HCT116 (cell line): ENCODE measurements at regions of chr13 and their contacts with region 1.

Region 1: DNA sequence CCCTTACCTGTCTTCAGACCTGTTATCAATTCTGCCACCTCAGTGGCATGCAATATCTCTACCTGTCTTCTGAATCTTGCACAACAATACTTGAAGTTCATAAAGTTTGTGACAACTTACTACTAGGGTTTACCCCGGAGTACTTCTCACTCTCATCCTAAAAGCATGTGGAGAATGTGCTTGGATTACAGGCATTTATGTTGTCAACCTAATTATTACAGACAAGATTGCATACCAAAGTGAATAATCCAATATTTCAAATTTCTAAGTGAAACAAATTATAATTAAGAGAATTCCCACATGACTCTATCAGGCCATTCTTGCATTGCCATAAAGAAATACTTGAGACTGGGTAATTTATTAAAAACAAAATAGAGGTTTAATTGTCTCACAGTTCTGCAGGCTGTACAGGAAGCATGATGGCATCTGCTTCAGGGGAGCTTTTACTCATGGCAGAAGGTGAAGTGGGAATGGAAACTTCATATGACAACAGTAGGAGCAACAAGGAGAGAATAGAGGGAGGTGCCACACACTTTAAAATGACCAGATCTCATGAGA is 661.0 kb upstream of the SPRY2 start:
- DNase-seq: no peak
- ATAC-seq: no peak
- H3K4me3 ChIP-seq: no peak overlapping the region
- H3K27ac ChIP-seq: no peak overlapping the region
- H3K4me1 ChIP-seq: no peaks in the 10 kb centered on the region
- H3K27me3 ChIP-seq: no peaks in the 10 kb centered on the region
- CTCF ChIP-seq: no peak
- POLR2A ChIP-seq: no peak
- RAD21 ChIP-seq: no peak

Region 2: DNA sequence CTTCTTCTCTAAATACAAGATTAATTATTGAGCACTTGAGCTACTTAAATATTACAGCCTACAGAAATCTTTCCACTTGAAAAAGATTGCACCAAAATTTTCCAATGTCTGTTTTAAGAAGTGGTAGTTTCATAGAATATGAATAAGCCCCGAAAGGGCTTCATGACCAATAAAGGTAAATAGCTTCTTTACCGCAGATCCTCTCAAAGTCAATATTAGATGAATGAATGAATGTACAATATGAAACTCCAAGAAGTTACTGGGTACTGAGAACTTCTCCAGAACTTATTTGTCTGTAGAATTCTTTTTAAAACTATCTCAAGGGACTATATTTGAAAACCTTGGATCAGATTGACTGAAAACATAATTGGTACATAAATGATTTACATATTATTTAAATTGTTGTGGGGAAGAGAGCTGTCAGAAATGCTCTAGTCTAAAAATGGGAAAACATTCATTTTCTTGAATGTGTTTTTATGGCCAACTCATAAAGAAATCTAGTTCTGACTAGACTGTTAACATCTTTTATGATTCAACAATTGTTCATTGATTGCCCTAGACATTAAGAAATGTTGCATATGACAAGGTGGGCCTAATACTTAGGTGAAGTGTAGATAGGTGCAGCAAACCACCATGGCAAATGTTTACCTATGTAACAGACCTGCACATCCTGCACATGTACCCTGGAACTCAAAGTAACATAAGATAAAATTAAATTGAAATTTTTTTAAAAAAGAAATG is 888.0 kb before region 1 on chr13:
- CTCF ChIA-PET with region 1: no interaction called
- POLR2A ChIA-PET with region 1: no interaction called
- RAD21 ChIA-PET with region 1: no interaction called
- intact Hi-C with region 1: loop called (anchors 5 kb)
- DNase-seq: no peak
- ATAC-seq: no peak
- H3K4me3 ChIP-seq: no peak overlapping the region
- H3K27ac ChIP-seq: no peak overlapping the region
- H3K4me1 ChIP-seq: no peaks in the 10 kb centered on the region
- H3K27me3 ChIP-seq: no peaks in the 10 kb centered on the region
- CTCF ChIP-seq: no peak
- POLR2A ChIP-seq: no peak
- RAD21 ChIP-seq: no peak

Region 3: DNA sequence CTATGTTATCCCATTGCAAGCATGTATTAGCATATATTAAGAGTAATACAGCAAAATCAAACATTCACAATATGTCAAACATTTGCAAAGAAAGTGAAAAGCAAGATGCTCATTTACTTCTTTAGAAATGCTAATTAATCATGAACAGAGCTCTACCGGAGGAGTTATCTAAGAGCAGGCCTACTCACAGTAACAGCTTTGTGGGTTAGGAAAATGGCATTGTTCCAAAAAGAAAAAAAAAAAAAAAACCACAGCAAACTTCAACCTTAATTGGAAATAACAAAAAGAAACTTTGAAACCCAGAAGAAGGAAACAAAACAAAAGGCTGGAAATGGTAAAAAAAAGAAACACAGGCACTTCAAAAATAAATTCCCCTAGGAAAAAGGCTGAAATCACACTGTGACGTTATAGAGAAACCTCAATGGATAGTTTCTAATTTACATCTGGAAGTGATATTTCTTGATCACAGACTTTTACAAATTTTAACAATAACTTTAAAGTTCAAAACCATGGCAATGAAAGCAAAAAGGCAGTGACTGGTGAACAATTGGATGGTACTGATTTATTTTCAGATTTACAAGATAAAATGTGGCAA is 575.8 kb after region 1 on chr13:
- CTCF ChIA-PET with region 1: no interaction called
- POLR2A ChIA-PET with region 1: no interaction called
- RAD21 ChIA-PET with region 1: no interaction called
- intact Hi-C with region 1: no loop called
- DNase-seq: no peak
- ATAC-seq: no peak
- H3K4me3 ChIP-seq: no peak overlapping the region
- H3K27ac ChIP-seq: no peak overlapping the region
- H3K4me1 ChIP-seq: no peaks in the 10 kb centered on the region
- H3K27me3 ChIP-seq: no peaks in the 10 kb centered on the region
- CTCF ChIP-seq: no peak
- POLR2A ChIP-seq: no peak
- RAD21 ChIP-seq: no peak